Prostate gland (tissue), 2 donors: ENCODE measurements at regions of chr2 and their contacts with region 1.

Region 1: GRCh38 chr2:69012310-69013141 is 453 bp upstream of the ANTXR1 start:
- DNase-seq: peak; percentile 51
- H3K4me3 ChIP-seq: peak overlapping the region; percentile 46 to 48
- H3K27ac ChIP-seq: peak overlapping the region; percentile 51 to 73
- H3K4me1 ChIP-seq: no peaks in the 10 kb centered on the region
- H3K27me3 ChIP-seq: no peaks in the 10 kb centered on the region
- CTCF ChIP-seq: peak; percentile 65 to 77 (median 76)
- POLR2A ChIP-seq: no peak

Region 2: GRCh38 chr2:68943581-68944568 is 68.7 kb before region 1 on chr2:
- intact Hi-C with region 1: loop called (anchors 10 kb)
- DNase-seq: peak; percentile 63
- H3K4me3 ChIP-seq: no peak overlapping the region
- H3K27ac ChIP-seq: no peak overlapping the region
- H3K4me1 ChIP-seq: no peaks in the 10 kb centered on the region
- H3K27me3 ChIP-seq: no peaks in the 10 kb centered on the region
- CTCF ChIP-seq: peak; percentile 47 to 84 (median 68)
- POLR2A ChIP-seq: no peak

Region 3: GRCh38 chr2:69149631-69150215 is 137.2 kb after region 1 on chr2:
- intact Hi-C with region 1: loop called (anchors 10 kb)
- DNase-seq: no peak
- H3K4me3 ChIP-seq: no peak overlapping the region
- H3K27ac ChIP-seq: peak overlapping the region in 1 of 2 donors; percentile 42
- H3K4me1 ChIP-seq: no peaks in the 10 kb centered on the region
- H3K27me3 ChIP-seq: no peaks in the 10 kb centered on the region
- CTCF ChIP-seq: no peak
- POLR2A ChIP-seq: no peak

Region 4: DNA sequence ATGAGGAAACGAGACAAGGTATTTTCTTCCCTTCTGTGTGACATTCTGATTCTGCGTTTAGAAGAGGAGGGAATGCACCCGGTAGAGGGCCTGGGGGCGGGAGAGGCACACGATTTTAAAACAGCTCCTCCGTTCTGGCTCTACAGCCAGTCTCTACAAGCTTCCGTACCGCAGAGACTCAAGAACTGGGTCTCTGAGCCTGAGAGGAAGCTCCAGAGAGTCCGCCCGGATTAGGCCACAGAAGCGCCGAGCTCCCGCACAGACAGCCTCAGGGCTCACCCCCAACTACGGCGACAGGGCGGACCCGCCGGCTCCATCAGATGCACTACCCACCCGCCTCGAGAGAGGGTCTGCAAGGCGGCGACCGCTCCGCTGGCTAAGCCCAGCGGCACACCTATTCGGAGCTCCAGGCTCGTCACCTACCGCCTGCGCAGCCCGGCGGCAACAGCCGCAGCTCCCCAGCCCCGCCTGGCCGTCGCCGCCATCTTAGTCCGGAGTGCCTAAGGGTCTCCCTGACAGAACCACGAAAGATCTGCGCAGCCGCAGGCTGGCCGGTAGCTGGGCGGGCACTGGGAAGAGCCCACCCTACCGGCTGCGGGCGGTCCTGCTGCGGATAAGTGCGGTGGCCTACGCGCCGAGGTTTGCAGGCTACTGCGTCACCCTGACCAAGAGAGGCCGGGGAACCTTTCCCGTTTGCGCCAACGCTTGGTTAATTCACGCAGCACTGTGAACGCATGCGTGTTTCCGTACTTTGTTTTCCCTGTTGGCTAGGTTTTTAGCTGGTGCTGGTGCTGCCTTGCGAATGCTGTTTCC is 424.6 kb after region 1 on chr2 and contains the start of gene NFU1:
- intact Hi-C with region 1: loop called (anchors 2 kb)
- DNase-seq: peak; percentile 83
- H3K4me3 ChIP-seq: peak within 1 kb of the TSS; percentile 65 to 78
- H3K27ac ChIP-seq: peak within 1 kb of the TSS; percentile 96 to 98
- H3K4me1 ChIP-seq: no peaks in the 10 kb centered on the region
- H3K27me3 ChIP-seq: no peaks in the 10 kb centered on the region
- CTCF ChIP-seq: peak; percentile 28 to 78 (median 58)
- POLR2A ChIP-seq: peak; percentile 79
- total RNA-seq, gene NFU1: 33.4 to 42.0 TPM

Region 5: DNA sequence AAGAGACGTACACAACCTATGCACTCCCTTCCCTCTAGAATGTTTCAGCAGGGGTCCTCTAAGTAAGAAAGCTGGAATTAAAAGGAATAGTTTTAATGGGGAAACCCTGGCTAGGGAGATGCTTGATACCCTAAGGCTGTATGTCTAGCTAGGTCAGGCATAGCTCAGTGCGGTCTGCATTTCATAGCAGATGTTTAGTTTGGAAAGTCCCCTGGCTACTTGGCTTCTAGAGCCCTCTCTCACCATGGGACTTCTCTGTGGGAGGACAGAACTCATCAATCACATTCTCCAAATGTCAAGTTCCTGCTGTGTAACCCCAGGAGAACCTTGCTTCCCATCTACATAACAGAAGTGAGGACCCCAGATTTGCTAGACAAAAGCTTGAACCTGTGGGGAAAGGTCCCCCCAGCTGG is 705.3 kb after region 1 on chr2:
- intact Hi-C with region 1: loop called (anchors 10 kb)
- DNase-seq: no peak
- H3K4me3 ChIP-seq: no peak overlapping the region
- H3K27ac ChIP-seq: no peak overlapping the region
- H3K4me1 ChIP-seq: no peaks in the 10 kb centered on the region
- H3K27me3 ChIP-seq: no peaks in the 10 kb centered on the region
- CTCF ChIP-seq: no peak
- POLR2A ChIP-seq: no peak